WTC11 (cell line): ENCODE measurements at regions of chr15 and their contacts with region 1.

Region 1: DNA sequence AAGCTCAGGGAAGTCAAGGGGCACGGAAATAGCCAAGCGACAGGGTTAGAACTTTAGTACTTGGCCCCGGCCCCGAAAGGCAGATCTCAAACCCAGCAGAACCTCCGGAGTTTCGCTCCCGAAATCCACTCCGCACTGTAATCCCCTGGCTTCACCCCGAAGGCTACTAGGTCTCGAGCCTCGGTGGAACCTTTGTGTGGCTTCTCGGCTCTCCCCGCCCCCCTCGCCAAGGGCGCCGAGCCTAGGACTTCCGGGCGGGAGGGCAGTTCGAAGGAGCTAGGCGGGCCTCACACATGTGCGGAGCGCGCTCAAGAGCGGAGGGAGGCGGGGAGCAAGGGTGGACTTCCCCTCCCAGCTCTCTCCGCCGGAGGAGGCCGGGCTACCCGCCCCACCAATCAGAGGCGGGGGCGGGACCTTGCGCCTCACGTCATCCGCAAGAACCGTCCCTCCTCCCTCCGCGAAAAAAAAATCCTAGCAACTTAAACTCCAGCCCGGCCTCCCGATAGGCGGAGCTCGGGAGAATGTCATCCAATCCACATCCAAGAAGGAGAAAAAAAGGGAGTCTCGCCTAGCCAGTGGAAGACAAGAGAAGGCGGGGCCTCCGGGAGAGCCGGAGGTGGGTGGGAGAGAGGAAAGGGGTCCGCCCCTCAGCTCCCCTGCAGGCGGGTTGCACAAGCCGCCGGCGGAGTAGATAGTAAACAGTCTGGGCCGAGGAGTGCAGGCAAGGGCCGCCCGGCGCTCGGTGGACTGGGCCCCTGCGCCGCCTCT is 2.4 kb upstream of the SIN3A start:
- DNase-seq: peak; percentile 97
- ATAC-seq: peak; percentile 21
- H3K4me3 Mint-ChIP-seq: peak overlapping the region; percentile 90
- H3K27ac Mint-ChIP-seq: peak overlapping the region; percentile 100
- H3K4me1 Mint-ChIP-seq: peaks cover 17% of the 10 kb centered on the region
- H3K27me3 Mint-ChIP-seq: no peaks in the 10 kb centered on the region; the same call in 1 of the 2 replicates
- CTCF ChIP-seq: no peak

Region 2: GRCh38 chr15:75023181-75023871 is 430.6 kb before region 1 on chr15 and contains the start of gene PPCDC:
- CTCF ChIA-PET with region 1: no interaction called
- POLR2A ChIA-PET with region 1: interaction called, 10 read pairs
- DNase-seq: peak; percentile 97
- ATAC-seq: peak; percentile 99
- H3K4me3 Mint-ChIP-seq: peak within 1 kb of the TSS; percentile 96
- H3K27ac Mint-ChIP-seq: peak within 1 kb of the TSS; percentile 84
- H3K4me1 Mint-ChIP-seq: peaks cover 17% of the 10 kb centered on the region
- H3K27me3 Mint-ChIP-seq: no peaks in the 10 kb centered on the region
- CTCF ChIP-seq: no peak
- total RNA-seq, gene PPCDC: 25.7 to 30.1 TPM (median 27.8 TPM) in 3 replicates

Region 3: GRCh38 chr15:75578948-75579920 is 125.3 kb after region 1 on chr15 and contains the start of gene PTPN9:
- CTCF ChIA-PET with region 1: interaction called, 16 read pairs
- POLR2A ChIA-PET with region 1: interaction called, 37 read pairs
- DNase-seq: peak; percentile 94
- ATAC-seq: peak; percentile 83
- H3K4me3 Mint-ChIP-seq: peak within 1 kb of the TSS; percentile 97
- H3K27ac Mint-ChIP-seq: peak within 1 kb of the TSS; percentile 96
- H3K4me1 Mint-ChIP-seq: peaks cover 26% of the 10 kb centered on the region
- H3K27me3 Mint-ChIP-seq: no peaks in the 10 kb centered on the region
- CTCF ChIP-seq: no peak
- total RNA-seq, gene PTPN9: 36.1 to 45.5 TPM (median 36.6 TPM) in 3 replicates

Region 4: GRCh38 chr15:75639709-75640482 is 186.0 kb after region 1 on chr15 and contains the start of gene IMP3:
- CTCF ChIA-PET with region 1: interaction called, 12 read pairs
- POLR2A ChIA-PET with region 1: interaction called, 76 read pairs
- DNase-seq: peak; percentile 96
- ATAC-seq: peak; percentile 97
- H3K4me3 Mint-ChIP-seq: peak within 1 kb of the TSS; percentile 92
- H3K27ac Mint-ChIP-seq: peak within 1 kb of the TSS; percentile 98
- H3K4me1 Mint-ChIP-seq: peaks cover 35% of the 10 kb centered on the region
- H3K27me3 Mint-ChIP-seq: peaks cover 1% of the 10 kb centered on the region; the same call in 1 of the 2 replicates
- CTCF ChIP-seq: no peak
- total RNA-seq, gene IMP3: 93.7 to 107 TPM (median 94.8 TPM) in 3 replicates

Region 5: DNA sequence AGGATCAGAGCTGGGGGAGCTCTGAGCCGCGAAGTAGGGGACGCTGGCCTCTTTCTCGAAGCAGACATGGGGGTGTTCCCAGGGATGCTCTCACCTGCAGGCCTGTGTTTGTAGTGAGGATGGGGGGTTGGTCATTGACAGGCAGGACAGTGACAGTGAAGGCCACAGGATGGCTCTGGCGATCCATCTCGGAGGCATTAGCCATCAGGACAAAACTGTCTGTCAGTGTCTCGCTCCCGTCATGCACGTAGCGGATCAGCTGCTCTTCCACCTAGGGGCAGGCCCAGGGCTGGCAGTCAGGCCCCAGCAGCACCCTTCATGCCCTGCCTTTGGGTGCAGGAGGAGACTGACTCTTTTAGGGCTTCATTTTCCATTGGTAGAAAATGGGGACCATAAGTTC is 230.8 kb after region 1 on chr15:
- CTCF ChIA-PET with region 1: interaction called, 38 read pairs
- POLR2A ChIA-PET with region 1: interaction called, 3 read pairs
- DNase-seq: no peak
- ATAC-seq: no peak
- H3K4me3 Mint-ChIP-seq: no peak overlapping the region
- H3K27ac Mint-ChIP-seq: no peak overlapping the region
- H3K4me1 Mint-ChIP-seq: peaks cover 22% of the 10 kb centered on the region
- H3K27me3 Mint-ChIP-seq: 0 out of 2 replicates have a peak, but pooled peaks cover 2% of the 10 kb centered on the region
- CTCF ChIP-seq: no peak

Region 6: GRCh38 chr15:75750261-75751050 is 296.6 kb after region 1 on chr15:
- CTCF ChIA-PET with region 1: no interaction called
- POLR2A ChIA-PET with region 1: no interaction called
- DNase-seq: no peak
- ATAC-seq: no peak
- H3K4me3 Mint-ChIP-seq: no peak overlapping the region
- H3K27ac Mint-ChIP-seq: 0 out of 2 replicates have a peak overlapping the region, but pooled peaks have one; percentile 22
- H3K4me1 Mint-ChIP-seq: no peaks in the 10 kb centered on the region
- H3K27me3 Mint-ChIP-seq: no peaks in the 10 kb centered on the region; the same call in 1 of the 2 replicates
- CTCF ChIP-seq: no peak